ENCODE measurements at regions of chr20 and their contacts with region 1.

Region 1: GRCh38 chr20:8853805-8854338 is 215.0 kb upstream of the PLCB4 start:
- DNase-seq: no peak

Region 2: DNA sequence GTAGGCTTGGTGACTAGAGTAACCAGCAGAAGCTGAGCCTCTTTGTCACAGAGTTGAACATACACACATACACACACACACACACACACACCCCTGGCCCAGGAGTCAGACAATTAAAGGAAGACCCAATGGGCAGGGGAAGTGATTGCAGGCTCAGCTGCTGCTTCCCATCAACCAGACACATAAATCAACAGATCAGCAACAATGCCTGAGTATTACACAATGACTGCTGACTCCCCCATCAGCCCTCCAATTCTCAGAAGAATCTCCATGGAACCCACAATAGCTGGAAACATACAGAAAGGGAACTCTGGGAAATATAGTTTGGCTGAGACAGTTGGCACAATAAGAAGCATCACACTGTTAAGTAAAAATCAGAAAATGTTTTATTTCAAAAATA is 55.4 kb before region 1 on chr20:
- intact Hi-C with region 1: loop called (anchors 5 kb)
- DNase-seq: no peak

Region 3: GRCh38 chr20:8932192-8933165 is 78.6 kb after region 1 on chr20:
- intact Hi-C with region 1: loop called (anchors 5 kb)
- DNase-seq: no peak

Region 4: GRCh38 chr20:9068851-9069663 is 215.2 kb after region 1 on chr20 and contains the start of gene PLCB4:
- intact Hi-C with region 1: loop called (anchors 5 kb)
- DNase-seq: peak; percentile 78
- total RNA-seq, gene PLCB4: 20.5 TPM

Region 5: GRCh38 chr20:9172851-9173250 is 319.0 kb after region 1 on chr20:
- intact Hi-C with region 1: loop called (anchors 5 kb)
- DNase-seq: no peak

Region 6: DNA sequence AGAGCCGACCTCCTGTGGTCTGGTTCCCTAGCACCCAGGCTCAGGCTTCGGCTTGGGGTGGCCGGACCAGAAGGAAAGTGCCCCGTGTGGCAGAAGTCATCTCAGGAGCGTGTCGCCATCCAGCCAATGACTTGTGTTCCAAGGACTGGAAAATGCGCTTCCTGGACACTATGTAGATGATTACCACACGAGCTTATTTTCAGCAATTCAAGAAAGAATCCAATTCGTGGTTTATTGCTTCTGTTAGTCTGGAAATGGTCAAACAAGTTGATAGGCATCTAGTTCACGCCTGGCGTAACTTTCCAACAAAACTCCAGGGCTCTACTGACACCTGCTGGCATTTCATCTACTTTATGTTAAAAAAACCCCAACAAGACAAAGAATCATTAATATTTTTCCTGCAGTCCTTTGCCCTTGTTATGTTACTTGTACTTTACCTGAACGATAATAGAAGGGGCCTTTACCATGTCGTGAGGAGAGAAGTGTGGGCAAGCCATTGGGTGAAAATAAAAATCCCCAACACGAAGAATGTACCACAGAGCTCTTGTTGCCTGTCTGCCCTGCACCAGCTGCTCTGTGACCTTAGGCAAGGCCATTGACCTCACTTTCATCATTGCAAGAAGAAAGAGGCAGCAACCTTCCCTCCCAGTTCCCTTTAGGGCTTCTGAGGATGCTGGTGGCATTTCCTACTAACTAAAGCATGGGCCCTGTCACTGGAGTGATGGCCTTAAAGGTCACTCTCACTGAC is 505.9 kb after region 1 on chr20:
- intact Hi-C with region 1: loop called (anchors 5 kb)
- DNase-seq: no peak

Measured in cardiac septum (tissue), 1 donor.